PC-3 (cell line): ENCODE measurements at regions of chr4 and their contacts with region 1.

Region 1: GRCh38 chr4:164731827-164732474 is 22.0 kb upstream of the SMIM31 start:
- DNase-seq: peak; percentile 63
- ATAC-seq: peak; percentile 51; the same call in 1 of the 2 replicates
- H3K4me3 ChIP-seq: no peak overlapping the region
- H3K27ac ChIP-seq: no peak overlapping the region
- H3K4me1 ChIP-seq: no peaks in the 10 kb centered on the region
- H3K27me3 ChIP-seq: no peaks in the 10 kb centered on the region
- CTCF ChIP-seq: peak; percentile 86

Region 2: GRCh38 chr4:164313853-164314252 is 418.1 kb before region 1 on chr4:
- CTCF ChIA-PET with region 1: interaction called, 3 read pairs
- POLR2A ChIA-PET with region 1: no interaction called
- intact Hi-C with region 1: loop called (anchors 1 kb)
- DNase-seq: no peak
- ATAC-seq: no peak
- H3K4me3 ChIP-seq: no peak overlapping the region
- H3K27ac ChIP-seq: no peak overlapping the region
- H3K4me1 ChIP-seq: no peaks in the 10 kb centered on the region
- H3K27me3 ChIP-seq: no peaks in the 10 kb centered on the region
- CTCF ChIP-seq: no peak

Region 3: GRCh38 chr4:164440199-164440598 is 291.8 kb before region 1 on chr4:
- CTCF ChIA-PET with region 1: no interaction called
- POLR2A ChIA-PET with region 1: no interaction called
- intact Hi-C with region 1: loop called (anchors 10 kb)
- DNase-seq: peak; percentile 87
- ATAC-seq: peak; percentile 88
- H3K4me3 ChIP-seq: peak overlapping the region; percentile 37
- H3K27ac ChIP-seq: peak overlapping the region; percentile 86
- H3K4me1 ChIP-seq: peaks cover 44% of the 10 kb centered on the region
- H3K27me3 ChIP-seq: no peaks in the 10 kb centered on the region
- CTCF ChIP-seq: no peak

Region 4: DNA sequence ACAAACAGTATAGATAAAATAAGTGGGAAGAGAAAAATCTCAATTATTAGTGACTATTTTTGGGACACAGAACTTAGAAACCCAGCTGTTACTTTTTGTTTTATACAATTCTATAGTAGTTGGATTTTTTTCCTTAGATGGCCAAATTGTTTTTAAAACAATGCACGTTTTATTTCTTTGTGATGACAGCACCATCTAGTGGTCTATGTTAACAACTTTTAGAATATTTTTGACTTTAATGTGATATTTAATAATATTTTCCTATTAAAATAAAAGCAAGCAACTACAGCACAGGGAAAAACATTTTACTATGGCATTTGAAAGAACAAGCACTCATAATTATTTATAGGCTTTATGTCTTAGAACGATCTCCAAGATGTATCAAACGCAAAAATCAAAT is 16.4 kb after region 1 on chr4:
- CTCF ChIA-PET with region 1: no interaction called
- POLR2A ChIA-PET with region 1: no interaction called
- intact Hi-C with region 1: no loop called
- DNase-seq: peak; percentile 52
- ATAC-seq: no peak
- H3K4me3 ChIP-seq: no peak overlapping the region
- H3K27ac ChIP-seq: no peak overlapping the region
- H3K4me1 ChIP-seq: peaks cover 4% of the 10 kb centered on the region; the same call in 1 of the 2 replicates
- H3K27me3 ChIP-seq: no peaks in the 10 kb centered on the region
- CTCF ChIP-seq: peak; percentile 54

Region 5: GRCh38 chr4:164918956-164919355 is 187.0 kb after region 1 on chr4:
- CTCF ChIA-PET with region 1: no interaction called
- POLR2A ChIA-PET with region 1: no interaction called
- intact Hi-C with region 1: no loop called
- DNase-seq: no peak
- ATAC-seq: no peak
- H3K4me3 ChIP-seq: no peak overlapping the region
- H3K27ac ChIP-seq: no peak overlapping the region
- H3K4me1 ChIP-seq: no peaks in the 10 kb centered on the region
- H3K27me3 ChIP-seq: no peaks in the 10 kb centered on the region
- CTCF ChIP-seq: no peak